ENCODE measurements at regions of chr12 and their contacts with region 1.

Region 1: DNA sequence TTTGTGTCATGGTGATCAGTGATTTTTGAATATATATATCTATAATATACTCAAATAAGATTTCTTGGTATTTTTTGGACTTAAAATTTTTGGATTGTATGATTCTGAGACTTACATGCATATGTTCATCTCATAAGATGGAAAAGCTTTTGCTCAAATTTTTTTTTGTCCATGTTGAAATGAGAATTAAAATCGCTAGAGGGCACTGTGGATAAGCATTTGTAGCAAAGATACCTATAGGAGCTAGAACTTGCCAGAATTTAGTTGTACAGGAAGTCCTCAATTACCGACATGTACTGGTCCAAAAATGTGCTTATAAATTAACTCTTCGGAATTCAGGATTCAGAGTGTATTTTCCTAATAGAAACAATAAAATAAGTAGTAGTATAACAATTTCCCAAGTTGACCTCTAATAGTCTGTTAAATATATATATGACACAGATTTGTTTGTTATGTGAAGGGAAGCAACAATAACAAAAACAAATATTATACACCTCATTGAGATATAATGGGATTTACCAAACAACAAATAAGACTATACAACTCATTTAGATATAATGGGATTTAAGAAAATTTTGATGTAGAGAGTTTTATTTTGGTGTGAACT is 179.6 kb downstream of the TMEM117 start:
- DNase-seq: peak; percentile 62
- H3K4me3 Mint-ChIP-seq: no peak overlapping the region
- H3K27ac Mint-ChIP-seq: no peak overlapping the region
- H3K4me1 Mint-ChIP-seq: no peaks in the 10 kb centered on the region
- H3K27me3 Mint-ChIP-seq: no peaks in the 10 kb centered on the region
- CTCF ChIP-seq: peak; percentile 51

Region 2: GRCh38 chr12:43882578-43883178 is 132.8 kb before region 1 on chr12:
- CTCF ChIA-PET with region 1: no interaction called
- POLR2A ChIA-PET with region 1: no interaction called
- intact Hi-C with region 1: no loop called
- DNase-seq: peak; percentile 65
- H3K4me3 Mint-ChIP-seq: no peak overlapping the region
- H3K27ac Mint-ChIP-seq: no peak overlapping the region
- H3K4me1 Mint-ChIP-seq: no peaks in the 10 kb centered on the region
- H3K27me3 Mint-ChIP-seq: no peaks in the 10 kb centered on the region
- CTCF ChIP-seq: peak; percentile 71

Region 3: DNA sequence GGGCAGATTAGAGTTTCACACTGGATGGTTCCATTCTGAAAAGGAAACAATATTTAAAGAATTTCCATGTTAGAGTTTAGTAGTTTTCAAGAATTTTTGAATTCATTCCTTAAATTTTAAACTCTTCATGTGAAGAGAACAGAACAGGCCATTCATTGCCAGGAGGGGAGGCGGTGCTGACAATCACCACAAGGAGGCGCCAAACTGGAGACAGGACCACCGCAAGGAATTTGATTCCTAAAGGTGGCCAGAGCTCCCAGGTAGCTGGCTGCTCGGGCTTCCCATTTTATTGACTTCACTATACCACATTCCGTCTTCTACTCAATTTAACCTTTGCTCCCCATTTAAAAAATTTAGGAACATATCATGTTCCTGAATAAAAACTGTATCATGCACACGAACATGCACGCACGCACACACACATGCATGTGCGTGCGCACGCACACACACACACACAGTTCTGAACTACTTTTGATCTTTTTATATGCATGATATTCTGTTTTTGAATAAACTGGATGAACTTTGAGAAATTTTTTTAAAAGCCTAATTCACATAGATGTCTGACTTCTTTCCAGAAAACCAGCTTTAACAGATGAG is 759.5 kb after region 1 on chr12:
- CTCF ChIA-PET with region 1: no interaction called
- POLR2A ChIA-PET with region 1: no interaction called
- intact Hi-C with region 1: loop called (anchors 10 kb)
- DNase-seq: peak; percentile 52
- H3K4me3 Mint-ChIP-seq: no peak overlapping the region
- H3K27ac Mint-ChIP-seq: no peak overlapping the region
- H3K4me1 Mint-ChIP-seq: no peaks in the 10 kb centered on the region
- H3K27me3 Mint-ChIP-seq: peaks cover 58% of the 10 kb centered on the region
- CTCF ChIP-seq: peak; percentile 70

Region 4: DNA sequence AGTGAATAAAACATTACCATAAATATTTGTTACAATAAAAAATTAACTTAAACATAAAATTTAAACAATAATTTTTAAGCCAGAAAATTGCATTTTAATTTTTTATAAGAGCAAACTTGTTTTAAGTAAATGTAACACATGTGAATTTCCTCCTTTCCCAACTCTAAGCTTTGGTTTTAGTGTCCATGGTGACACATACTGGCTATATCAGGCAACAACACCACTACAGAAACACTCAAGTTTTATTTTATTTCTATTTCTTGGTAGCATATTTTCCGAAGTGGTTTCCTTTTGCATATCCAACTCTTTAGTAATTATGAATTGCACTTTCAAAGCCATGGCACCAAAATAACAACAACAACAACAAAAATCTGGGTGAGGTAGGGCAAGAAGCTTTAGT is 858.5 kb after region 1 on chr12:
- CTCF ChIA-PET with region 1: no interaction called
- POLR2A ChIA-PET with region 1: no interaction called
- intact Hi-C with region 1: loop called (anchors 1 kb)
- DNase-seq: peak; percentile 6
- H3K4me3 Mint-ChIP-seq: no peak overlapping the region
- H3K27ac Mint-ChIP-seq: no peak overlapping the region
- H3K4me1 Mint-ChIP-seq: peaks cover 9% of the 10 kb centered on the region
- H3K27me3 Mint-ChIP-seq: peaks cover 99% of the 10 kb centered on the region
- CTCF ChIP-seq: no peak